Naive thymus-derived CD4-positive, alpha-beta T cell (primary cell): ENCODE measurements at regions of chr12 and their contacts with region 1.

Region 1: DNA sequence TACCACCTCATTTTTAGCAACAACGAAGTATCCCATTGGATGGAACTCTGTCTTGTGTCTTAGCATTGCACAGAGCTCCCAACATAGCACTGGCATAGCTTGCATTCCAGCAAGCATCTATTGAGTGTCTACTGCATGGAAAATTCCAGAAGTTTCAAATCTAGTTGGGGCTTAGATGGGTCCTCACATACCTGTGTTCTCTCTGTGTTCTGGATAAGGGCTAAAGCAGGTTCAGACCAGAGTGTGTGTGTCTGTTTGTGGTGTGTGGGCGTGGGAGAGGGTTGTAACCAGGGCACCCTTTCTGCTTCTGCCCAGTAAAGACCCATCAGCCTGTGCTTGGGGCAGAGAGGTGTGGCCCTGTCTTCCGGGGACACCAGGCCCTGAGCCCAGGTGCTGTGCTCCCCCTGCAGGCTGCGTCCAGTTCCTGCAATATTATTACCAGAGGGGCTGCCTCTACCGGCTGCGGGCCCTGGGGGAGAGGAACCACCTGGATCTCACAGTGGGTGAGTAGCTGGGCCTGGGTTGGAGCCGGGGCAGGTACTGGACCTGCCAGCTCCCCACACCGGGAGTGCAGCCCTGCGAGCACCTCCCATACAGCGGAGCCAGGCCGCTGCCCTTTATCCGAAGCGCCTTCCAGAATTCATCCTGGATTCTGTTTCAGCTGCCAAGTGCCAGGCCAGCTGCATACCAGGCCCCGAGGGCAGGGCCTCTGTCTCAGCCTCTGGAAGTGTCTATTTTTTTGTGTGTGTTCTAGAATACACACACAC is 20.3 kb downstream of the RHOF start:
- DNase-seq: peak; percentile 64 to 79 (median 75)
- ATAC-seq: peak; percentile 91
- H3K4me3 ChIP-seq: no peak overlapping the region
- H3K4me3 Mint-ChIP-seq: no peak overlapping the region
- H3K27ac ChIP-seq: no peak overlapping the region
- H3K27ac Mint-ChIP-seq: peak overlapping the region in 8 of 9 donors; percentile 15 to 88 (median 59)
- H3K4me1 ChIP-seq: peaks cover 14 to 16% of the 10 kb centered on the region in 2 donors
- H3K4me1 Mint-ChIP-seq: peaks cover 3 to 15% (median 10%) of the 10 kb centered on the region in 7 donors
- H3K27me3 ChIP-seq: no peaks in the 10 kb centered on the region
- H3K27me3 Mint-ChIP-seq: no peaks in the 10 kb centered on the region

Region 2: DNA sequence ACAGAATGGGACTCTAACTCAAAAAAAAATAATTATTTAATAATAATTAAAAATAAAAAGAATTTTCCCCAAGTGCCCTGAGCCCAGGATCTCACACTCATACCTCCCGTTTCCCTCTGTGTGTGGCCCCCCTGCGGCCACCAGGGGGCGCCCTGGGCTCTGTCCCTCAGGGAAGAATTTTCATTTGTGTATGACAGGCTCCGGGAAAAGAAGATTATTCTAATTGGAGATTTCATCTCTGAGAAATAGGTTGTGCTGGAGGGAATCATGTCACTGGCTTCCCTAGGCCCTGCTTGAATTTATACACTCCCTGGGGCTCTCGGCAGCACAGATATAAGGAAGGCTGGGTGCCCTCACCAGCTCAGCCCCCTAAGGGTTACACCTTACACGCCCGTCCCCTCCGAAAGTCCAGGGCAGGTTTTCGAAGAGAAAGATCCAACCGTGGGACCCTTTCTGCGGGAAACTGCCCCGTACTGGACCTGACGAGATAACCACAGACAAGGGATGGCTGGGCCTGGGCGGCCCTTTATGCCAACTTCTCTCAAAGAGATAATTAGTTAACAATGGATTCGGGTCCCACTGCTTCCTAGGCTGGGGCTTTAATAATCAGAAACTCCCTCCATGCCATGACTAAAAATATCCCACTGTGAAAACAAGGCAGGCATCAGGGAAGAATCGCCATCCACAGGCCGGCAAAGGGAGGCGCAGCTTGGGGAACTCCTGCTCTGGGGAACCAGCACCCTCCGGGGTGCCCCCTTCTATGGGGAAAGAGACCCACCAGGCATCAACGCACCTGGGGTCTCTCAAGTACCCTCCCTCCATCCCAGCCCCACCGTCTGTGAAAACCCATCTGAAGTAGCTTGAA is 273.0 kb before region 1 on chr12:
- CTCF ChIA-PET with region 1: no interaction called
- POLR2A ChIA-PET with region 1: no interaction called
- intact Hi-C with region 1: loop called in 1 of 2 experiments (anchors 1 kb)
- DNase-seq: peak; percentile 44 to 80 (median 68)
- ATAC-seq: peak; percentile 93
- H3K4me3 ChIP-seq: no peak overlapping the region
- H3K4me3 Mint-ChIP-seq: no peak overlapping the region
- H3K27ac ChIP-seq: no peak overlapping the region
- H3K27ac Mint-ChIP-seq: peak overlapping the region in 2 of 9 donors; percentile 8 to 32
- H3K4me1 ChIP-seq: peaks cover 0 to 11% of the 10 kb centered on the region in 2 donors
- H3K4me1 Mint-ChIP-seq: peaks cover 0 to 19% (median 13%) of the 10 kb centered on the region in 7 donors
- H3K27me3 ChIP-seq: no peaks in the 10 kb centered on the region
- H3K27me3 Mint-ChIP-seq: no peaks in the 10 kb centered on the region

Region 3: GRCh38 chr12:121697098-121697698 is 76.0 kb before region 1 on chr12:
- CTCF ChIA-PET with region 1: interaction called, 19 read pairs
- POLR2A ChIA-PET with region 1: no interaction called
- intact Hi-C with region 1: loop called (anchors 1 kb)
- DNase-seq: peak in 7 of 9 donors; percentile 37 to 72 (median 63)
- ATAC-seq: no peak
- H3K4me3 ChIP-seq: no peak overlapping the region
- H3K4me3 Mint-ChIP-seq: no peak overlapping the region
- H3K27ac ChIP-seq: no peak overlapping the region
- H3K27ac Mint-ChIP-seq: peak overlapping the region in 4 of 9 donors; percentile 5 to 41 (median 28)
- H3K4me1 ChIP-seq: no peaks in the 10 kb centered on the region
- H3K4me1 Mint-ChIP-seq: peaks cover 0 to 5% (median 0%) of the 10 kb centered on the region in 7 donors
- H3K27me3 ChIP-seq: no peaks in the 10 kb centered on the region
- H3K27me3 Mint-ChIP-seq: peaks cover 0 to 7% (median 0%) of the 10 kb centered on the region in 5 donors

Region 4: GRCh38 chr12:121786441-121786825 is 13.2 kb after region 1 on chr12:
- CTCF ChIA-PET with region 1: interaction called, 325 read pairs
- POLR2A ChIA-PET with region 1: interaction called, 1,941 read pairs
- intact Hi-C with region 1: no loop called
- DNase-seq: peak in 5 of 9 donors; percentile 41 to 63 (median 47)
- ATAC-seq: peak; percentile 15
- H3K4me3 ChIP-seq: peak overlapping the region; percentile 38
- H3K4me3 Mint-ChIP-seq: peak overlapping the region; percentile 80 to 99 (median 90)
- H3K27ac ChIP-seq: peak overlapping the region; percentile 96
- H3K27ac Mint-ChIP-seq: peak overlapping the region; percentile 95 to 100 (median 100)
- H3K4me1 ChIP-seq: peaks cover 81 to 89% of the 10 kb centered on the region in 2 donors
- H3K4me1 Mint-ChIP-seq: peaks cover 63 to 96% (median 88%) of the 10 kb centered on the region in 7 donors
- H3K27me3 ChIP-seq: no peaks in the 10 kb centered on the region
- H3K27me3 Mint-ChIP-seq: no peaks in the 10 kb centered on the region

Region 5: GRCh38 chr12:123223241-123223668 is 1450.1 kb after region 1 on chr12:
- CTCF ChIA-PET with region 1: no interaction called
- POLR2A ChIA-PET with region 1: no interaction called
- intact Hi-C with region 1: no loop called
- DNase-seq: peak; percentile 19 to 79 (median 67)
- ATAC-seq: peak; percentile 98
- H3K4me3 ChIP-seq: peak overlapping the region; percentile 49
- H3K4me3 Mint-ChIP-seq: peak overlapping the region; percentile 68 to 93 (median 78)
- H3K27ac ChIP-seq: peak overlapping the region; percentile 57
- H3K27ac Mint-ChIP-seq: peak overlapping the region; percentile 87 to 99 (median 95)
- H3K4me1 ChIP-seq: peaks cover 3 to 15% of the 10 kb centered on the region in 2 donors
- H3K4me1 Mint-ChIP-seq: peaks cover 21 to 46% (median 42%) of the 10 kb centered on the region in 7 donors
- H3K27me3 ChIP-seq: no peaks in the 10 kb centered on the region
- H3K27me3 Mint-ChIP-seq: no peaks in the 10 kb centered on the region